ENCODE measurements at regions of chr4 and their contacts with region 1.

Region 1: GRCh38 chr4:173763374-173763773 is 233.3 kb upstream of the HAND2 start:
- DNase-seq: no peak
- ATAC-seq: peak; percentile 39 to 59

Region 2: GRCh38 chr4:173477016-173477415 is 286.4 kb before region 1 on chr4:
- intact Hi-C with region 1: no loop called
- DNase-seq: no peak
- ATAC-seq: no peak

Region 3: GRCh38 chr4:173707658-173708419 is 55.5 kb before region 1 on chr4:
- intact Hi-C with region 1: no loop called
- DNase-seq: no peak
- ATAC-seq: no peak

Region 4: GRCh38 chr4:173835903-173836302 is 72.5 kb after region 1 on chr4:
- intact Hi-C with region 1: loop called in 1 of 2 experiments (anchors 5 kb)
- DNase-seq: peak; percentile 63
- ATAC-seq: peak; percentile 57 to 98

Measured in left cardiac atrium (tissue), 4 donors.